Sigmoid colon (tissue), 7 donors: ENCODE measurements at regions of chrX and their contacts with region 1.

Region 1: DNA sequence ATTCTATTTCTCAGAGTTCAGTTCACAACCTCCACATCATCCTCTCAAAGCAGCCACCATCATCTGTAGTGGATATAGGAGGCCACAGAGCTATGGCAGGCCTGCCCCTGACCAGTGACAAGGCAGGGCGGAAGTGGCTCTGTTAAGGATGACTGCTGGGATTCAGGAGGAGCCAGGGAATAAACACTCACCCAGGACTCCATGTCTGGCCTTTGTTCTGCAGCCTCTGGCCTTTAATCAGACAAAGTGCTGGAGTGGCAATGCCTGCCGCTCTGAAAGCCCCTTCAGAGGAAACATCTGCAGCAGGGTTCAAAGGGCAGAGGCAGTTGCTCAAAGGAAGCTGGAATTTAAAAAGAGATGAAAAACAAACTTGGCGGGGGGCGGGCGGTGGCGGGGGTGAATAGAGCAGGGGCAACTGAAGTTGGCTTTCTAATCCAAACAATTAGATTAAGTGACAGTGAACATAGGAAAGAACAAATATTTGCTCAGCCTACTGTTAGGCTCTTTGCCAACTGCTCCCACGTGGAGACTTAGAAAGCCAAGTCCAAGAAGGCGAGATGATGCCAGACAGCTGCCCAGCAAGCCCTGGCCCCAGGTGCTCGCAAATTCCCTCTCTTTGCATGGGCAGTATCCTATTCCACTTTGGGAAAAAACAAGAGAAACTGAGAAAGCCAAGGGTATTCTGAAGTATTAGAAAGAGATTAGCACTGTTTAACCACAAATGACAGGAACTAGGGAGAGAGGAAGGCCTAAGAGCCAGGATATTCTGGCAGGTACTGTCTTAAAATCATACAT is 5.5 kb downstream of the MPP1 start:
- DNase-seq: no peak
- H3K4me3 ChIP-seq: no peak overlapping the region
- H3K27ac ChIP-seq: peak overlapping the region; percentile 17 to 67 (median 44)
- H3K4me1 ChIP-seq: peaks cover 0 to 31% (median 14%) of the 10 kb centered on the region in 4 donors
- H3K27me3 ChIP-seq: no peaks in the 10 kb centered on the region
- CTCF ChIP-seq: no peak
- EP300 ChIP-seq: no peak
- POLR2A ChIP-seq: no peak

Region 2: GRCh38 chrX:154370882-154371770 is 428.6 kb before region 1 on chrX:
- intact Hi-C with region 1: no loop called
- DNase-seq: peak; percentile 97
- H3K4me3 ChIP-seq: peak overlapping the region; percentile 73 to 80 (median 78)
- H3K27ac ChIP-seq: peak overlapping the region; percentile 98 to 99 (median 98)
- H3K4me1 ChIP-seq: peaks cover 0 to 32% (median 25%) of the 10 kb centered on the region in 4 donors
- H3K27me3 ChIP-seq: peaks cover 0 to 5% (median 0%) of the 10 kb centered on the region in 3 donors
- CTCF ChIP-seq: no peak
- EP300 ChIP-seq: no peak
- POLR2A ChIP-seq: peak; percentile 86 to 88

Region 3: GRCh38 chrX:154727871-154728270 is 71.9 kb before region 1 on chrX:
- intact Hi-C with region 1: loop called (anchors 2 kb)
- DNase-seq: peak; percentile 88
- H3K4me3 ChIP-seq: no peak overlapping the region
- H3K27ac ChIP-seq: peak overlapping the region; percentile 70 to 83 (median 80)
- H3K4me1 ChIP-seq: peaks cover 0 to 66% (median 60%) of the 10 kb centered on the region in 4 donors
- H3K27me3 ChIP-seq: no peaks in the 10 kb centered on the region
- CTCF ChIP-seq: no peak
- EP300 ChIP-seq: peak in 2 of 4 donors; percentile 16 to 56
- POLR2A ChIP-seq: no peak

Region 4: GRCh38 chrX:154908821-154909220 is 109.1 kb after region 1 on chrX:
- intact Hi-C with region 1: no loop called
- DNase-seq: no peak
- H3K4me3 ChIP-seq: no peak overlapping the region
- H3K27ac ChIP-seq: no peak overlapping the region
- H3K4me1 ChIP-seq: no peaks in the 10 kb centered on the region
- H3K27me3 ChIP-seq: no peaks in the 10 kb centered on the region
- CTCF ChIP-seq: no peak
- EP300 ChIP-seq: no peak
- POLR2A ChIP-seq: no peak